ENCODE measurements at regions of chr4 and their contacts with region 1.

Region 1: DNA sequence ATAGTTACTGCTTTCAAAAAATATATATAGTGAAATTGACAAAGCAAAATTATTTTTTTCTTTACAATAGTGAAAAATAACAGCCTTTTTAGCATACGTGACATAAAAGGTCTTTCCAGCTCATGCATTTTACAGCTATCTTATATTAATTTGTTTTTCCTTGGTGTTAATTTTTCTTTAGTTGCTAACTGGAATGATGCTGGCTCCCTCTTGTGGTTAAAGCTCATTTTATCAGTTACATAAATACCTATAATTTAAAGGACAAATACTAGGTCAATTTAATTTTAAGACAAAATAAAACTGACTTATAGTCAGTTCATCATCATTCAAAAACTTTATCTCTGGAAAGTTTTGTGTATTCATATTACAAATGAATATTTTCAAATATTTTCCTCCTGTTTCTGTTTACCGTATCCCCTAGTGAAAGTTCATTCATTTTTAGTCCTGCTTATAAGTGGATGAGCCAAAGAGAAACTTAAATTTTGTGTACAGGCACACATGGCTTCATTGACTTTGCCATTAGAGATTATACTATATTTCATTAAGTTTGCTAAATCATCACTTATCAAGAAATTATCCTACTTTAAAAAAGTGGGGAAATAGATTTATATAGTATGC is 9.9 kb upstream of the ANAPC4 start:
- DNase-seq: no peak
- H3K4me3 ChIP-seq: no peak overlapping the region
- H3K27me3 ChIP-seq: no peaks in the 10 kb centered on the region
- CTCF ChIP-seq: peak; percentile 58

Region 2: DNA sequence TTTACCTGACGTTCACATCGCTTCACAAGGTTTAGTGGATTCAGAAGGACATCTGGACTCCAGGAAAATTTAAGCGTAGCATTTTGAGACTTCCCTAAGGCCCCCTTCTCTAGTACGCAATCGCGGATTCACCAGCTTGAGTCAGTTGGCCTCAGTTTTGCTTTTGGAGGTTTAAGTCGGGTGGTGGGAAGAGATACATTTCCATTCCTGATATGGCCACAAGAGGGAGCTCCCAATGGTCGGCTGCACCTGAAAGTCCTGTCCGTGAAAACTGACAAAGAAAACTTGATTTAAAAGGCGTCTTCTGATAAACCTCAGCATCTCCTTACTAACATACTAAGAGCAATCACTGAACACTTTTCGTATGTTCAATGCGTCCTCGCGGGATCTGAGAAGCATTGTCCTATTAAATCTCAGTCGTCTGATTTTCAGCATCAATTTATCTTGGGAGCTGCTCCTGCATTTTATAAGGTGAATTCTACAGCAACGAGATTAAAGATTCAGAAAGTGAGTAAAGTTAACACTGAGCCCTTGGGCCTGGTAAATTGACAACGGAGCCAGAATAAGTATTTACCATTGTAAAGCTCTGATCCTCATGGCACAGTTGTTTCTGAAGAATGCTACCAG is 386.9 kb before region 1 on chr4:
- CTCF ChIA-PET with region 1: interaction called, 13 read pairs
- POLR2A ChIA-PET with region 1: no interaction called
- DNase-seq: no peak
- H3K4me3 ChIP-seq: no peak overlapping the region
- H3K27me3 ChIP-seq: peaks cover 9% of the 10 kb centered on the region
- CTCF ChIP-seq: peak; percentile 89

Region 3: DNA sequence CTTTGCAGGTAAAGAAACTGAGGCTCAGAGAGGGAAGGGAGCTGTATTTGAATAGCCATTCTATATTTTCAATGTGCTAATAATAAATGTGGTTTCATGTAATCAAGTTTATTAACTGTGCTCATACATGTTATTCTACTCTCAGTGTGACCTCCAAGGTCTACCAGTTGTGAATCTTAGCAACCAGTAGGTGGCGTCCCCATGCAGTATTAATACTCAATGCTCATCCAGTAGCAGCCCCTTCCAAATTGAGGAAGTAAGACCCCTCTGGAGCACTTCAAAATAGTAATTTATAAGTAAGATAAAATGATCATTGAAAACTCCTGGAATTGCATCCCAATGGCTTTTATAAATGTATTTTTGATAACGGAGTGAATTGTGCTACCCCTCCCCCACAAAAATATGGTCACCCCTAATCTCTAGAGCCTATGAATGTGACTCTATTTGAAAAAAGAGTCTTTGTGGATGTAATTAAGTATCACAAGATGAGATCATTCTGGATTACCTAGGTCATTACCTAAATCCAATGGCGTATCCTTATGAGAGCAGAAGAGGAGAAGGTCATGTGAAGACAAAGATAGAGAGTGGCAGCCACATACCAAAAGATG is 186.5 kb before region 1 on chr4:
- CTCF ChIA-PET with region 1: interaction called, 19 read pairs
- POLR2A ChIA-PET with region 1: no interaction called
- DNase-seq: no peak
- H3K4me3 ChIP-seq: no peak overlapping the region
- H3K27me3 ChIP-seq: no peaks in the 10 kb centered on the region
- CTCF ChIP-seq: peak; percentile 70

Region 4: DNA sequence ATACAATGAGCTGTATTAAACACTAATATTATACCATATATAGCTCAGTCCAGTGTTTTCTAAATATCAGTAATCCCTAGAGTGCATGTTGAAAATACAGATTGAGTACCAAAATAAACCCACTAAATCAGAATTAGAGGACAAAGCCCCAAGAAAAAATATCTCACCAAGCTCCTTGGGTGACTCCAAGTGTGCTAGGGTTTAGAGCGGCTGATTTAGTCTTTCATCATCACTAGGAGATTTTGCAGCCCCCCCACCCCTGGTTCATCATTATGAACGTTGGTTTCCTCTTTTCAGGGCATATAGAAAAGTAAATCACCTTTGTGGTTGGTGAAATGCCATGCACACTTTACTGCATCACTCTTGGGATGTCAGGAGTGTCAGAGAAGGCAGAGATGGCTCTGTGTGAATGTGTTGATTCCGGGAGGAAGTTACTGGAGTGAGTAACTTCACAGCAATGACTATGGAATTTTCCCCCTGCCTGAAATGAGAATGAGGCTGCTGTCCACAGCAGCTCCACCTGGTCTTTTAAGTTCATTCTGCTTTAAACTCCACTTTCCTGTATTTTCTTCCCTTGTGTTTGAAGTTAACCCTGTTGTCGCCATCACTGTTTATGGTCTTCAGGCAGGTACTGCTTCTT is 15.2 kb before region 1 on chr4:
- CTCF ChIA-PET with region 1: interaction called, 28 read pairs
- POLR2A ChIA-PET with region 1: no interaction called
- DNase-seq: no peak
- H3K4me3 ChIP-seq: no peak overlapping the region
- H3K27me3 ChIP-seq: no peaks in the 10 kb centered on the region
- CTCF ChIP-seq: no peak

Measured in BJ (cell line).